Prostate gland (tissue), 2 donors: ENCODE measurements at regions of chr2 and their contacts with region 1.

Region 1: DNA sequence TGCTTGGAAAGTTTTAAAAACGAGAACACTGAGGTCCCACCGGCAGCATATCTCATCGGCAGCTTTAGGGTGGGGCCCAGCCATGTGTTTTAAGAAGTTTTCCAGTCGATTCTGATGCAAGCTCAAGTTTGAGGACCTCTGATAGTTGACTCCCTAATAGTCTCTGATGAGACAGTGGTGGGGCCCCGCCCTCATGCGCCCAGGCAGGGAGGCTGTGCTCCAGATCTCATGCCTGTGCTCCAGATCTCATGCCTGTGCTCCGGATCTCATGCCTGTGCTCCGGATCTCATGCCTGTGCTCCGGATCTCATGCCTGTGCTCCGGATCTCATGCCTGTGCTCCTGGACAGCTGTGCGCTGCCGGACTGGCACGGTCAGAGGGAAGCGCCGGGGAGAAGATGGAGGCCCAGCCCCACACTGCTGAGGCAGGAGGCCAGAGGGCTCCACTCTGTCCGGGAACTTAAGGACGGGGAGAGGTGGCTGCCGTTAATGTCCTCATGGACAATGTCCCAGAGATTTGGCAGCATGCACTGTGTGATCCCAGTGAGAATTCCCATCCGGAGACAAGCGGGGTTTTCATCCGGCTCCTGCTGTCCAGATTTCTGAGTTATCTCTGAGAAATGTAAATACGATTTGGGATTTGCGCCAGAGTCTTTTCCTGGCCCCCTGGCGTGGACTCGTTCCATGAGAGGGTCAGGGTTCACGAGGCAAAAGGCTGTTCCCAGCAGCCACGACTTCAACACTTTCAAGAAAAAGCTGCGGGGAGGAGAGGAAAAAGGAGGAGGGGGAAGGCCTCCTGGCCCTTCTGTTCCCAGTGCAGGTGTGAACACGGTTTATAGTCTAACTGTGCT is 9.4 kb upstream of the COLEC11 start:
- DNase-seq: no peak
- H3K4me3 ChIP-seq: no peak overlapping the region
- H3K27ac ChIP-seq: peak overlapping the region; percentile 60
- H3K4me1 ChIP-seq: peaks cover 4% of the 10 kb centered on the region
- H3K27me3 ChIP-seq: no peaks in the 10 kb centered on the region
- CTCF ChIP-seq: no peak
- POLR2A ChIP-seq: no peak

Region 2: DNA sequence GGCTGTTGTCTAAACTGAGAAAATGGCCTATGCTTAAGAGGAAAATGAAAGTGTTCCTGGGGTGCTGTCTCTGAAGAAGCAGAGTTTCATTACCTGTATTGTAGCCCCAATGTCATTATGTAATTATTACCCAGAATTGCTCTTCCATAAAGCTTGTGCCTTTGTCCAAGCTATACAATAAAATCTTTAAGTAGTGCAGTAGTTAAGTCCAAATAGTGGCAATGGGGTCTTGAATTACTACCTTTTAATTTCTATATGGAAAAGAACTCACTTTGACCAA is 58.7 kb after region 1 on chr2:
- intact Hi-C with region 1: loop called (anchors 10 kb)
- DNase-seq: no peak
- H3K4me3 ChIP-seq: no peak overlapping the region
- H3K27ac ChIP-seq: no peak overlapping the region
- H3K4me1 ChIP-seq: no peaks in the 10 kb centered on the region
- H3K27me3 ChIP-seq: no peaks in the 10 kb centered on the region
- CTCF ChIP-seq: no peak
- POLR2A ChIP-seq: no peak